ENCODE measurements at regions of chr16 and their contacts with region 1.

Region 1: GRCh38 chr16:88811769-88812512 is at the start of gene APRT:
- DNase-seq: peak; percentile 94 to 99 (median 97)
- H3K4me3 ChIP-seq: peak within 1 kb of the TSS; percentile 90 to 94
- H3K4me3 Mint-ChIP-seq: peak within 1 kb of the TSS; percentile 95 to 100 (median 97)
- H3K27ac ChIP-seq: peak within 1 kb of the TSS; percentile 67
- H3K27ac Mint-ChIP-seq: peak within 1 kb of the TSS; percentile 88 to 98 (median 97)
- H3K4me1 ChIP-seq: peaks cover 21% of the 10 kb centered on the region
- H3K4me1 Mint-ChIP-seq: peaks cover 1 to 28% (median 15%) of the 10 kb centered on the region in 4 donors
- H3K27me3 ChIP-seq: no peaks in the 10 kb centered on the region
- H3K27me3 Mint-ChIP-seq: no peaks in the 10 kb centered on the region
- total RNA-seq, gene APRT: 171 to 175 TPM

Region 2: DNA sequence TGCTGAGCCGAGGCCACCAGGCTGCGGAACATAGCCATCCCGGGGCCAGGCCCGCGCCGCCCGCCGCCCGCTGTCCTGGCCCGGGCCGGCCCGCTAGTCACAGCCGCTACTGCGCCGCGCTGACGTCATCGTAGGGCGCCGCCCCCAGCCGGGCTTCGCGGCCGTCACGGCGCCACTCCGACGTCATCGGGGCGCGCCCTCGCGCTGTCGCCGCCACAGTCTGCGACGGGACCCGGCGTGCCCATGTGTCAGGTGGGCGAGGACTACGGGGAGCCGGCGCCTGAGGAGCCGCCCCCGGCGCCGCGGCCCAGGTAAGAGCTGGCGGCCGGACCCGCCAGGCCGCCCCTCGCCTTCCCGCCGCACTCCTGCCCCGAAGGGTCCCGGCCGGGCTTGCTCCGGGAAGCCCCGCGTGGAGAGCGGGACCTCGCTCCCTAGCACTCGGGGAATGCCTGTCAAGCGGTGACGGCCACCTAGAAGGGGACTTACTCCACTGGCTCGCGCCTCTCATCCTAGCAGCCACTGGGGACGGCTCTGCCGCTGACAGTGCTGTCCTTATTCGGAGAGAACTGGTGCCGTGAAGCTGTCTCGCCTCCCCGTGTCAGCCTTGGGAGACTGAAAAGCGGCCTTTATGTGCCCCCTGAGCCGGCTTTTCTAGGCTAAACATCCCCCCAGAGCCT is 105.5 kb before region 1 on chr16 and contains the starts of genes CTU2 and RNF166:
- CTCF ChIA-PET with region 1: interaction called, 4 read pairs
- POLR2A ChIA-PET with region 1: interaction called, 42 read pairs
- intact Hi-C with region 1: no loop called
- DNase-seq: peak; percentile 90 to 94 (median 91)
- H3K4me3 ChIP-seq: peak within 1 kb of the TSS; percentile 95 to 98
- H3K4me3 Mint-ChIP-seq: peak within 1 kb of the TSS; percentile 93 to 96 (median 96)
- H3K27ac ChIP-seq: peak within 1 kb of the TSS; percentile 85
- H3K27ac Mint-ChIP-seq: peak within 1 kb of the TSS; percentile 97 to 99 (median 98)
- H3K4me1 ChIP-seq: peaks cover 50% of the 10 kb centered on the region
- H3K4me1 Mint-ChIP-seq: peaks cover 20 to 62% (median 39%) of the 10 kb centered on the region in 4 donors
- H3K27me3 ChIP-seq: no peaks in the 10 kb centered on the region
- H3K27me3 Mint-ChIP-seq: no peaks in the 10 kb centered on the region
- total RNA-seq, gene CTU2: 20.4 to 21.1 TPM
- total RNA-seq, gene RNF166: 129 to 137 TPM

Region 3: GRCh38 chr16:88925101-88925887 is 113.4 kb after region 1 on chr16:
- CTCF ChIA-PET with region 1: no interaction called
- POLR2A ChIA-PET with region 1: no interaction called
- intact Hi-C with region 1: no loop called
- DNase-seq: no peak
- H3K4me3 ChIP-seq: no peak overlapping the region
- H3K4me3 Mint-ChIP-seq: no peak overlapping the region
- H3K27ac ChIP-seq: no peak overlapping the region
- H3K27ac Mint-ChIP-seq: no peak overlapping the region
- H3K4me1 ChIP-seq: peaks cover 8% of the 10 kb centered on the region
- H3K4me1 Mint-ChIP-seq: peaks cover 2 to 5% (median 3%) of the 10 kb centered on the region in 4 donors
- H3K27me3 ChIP-seq: no peaks in the 10 kb centered on the region
- H3K27me3 Mint-ChIP-seq: peaks cover 0 to 2% of the 10 kb centered on the region in 2 donors

Region 4: DNA sequence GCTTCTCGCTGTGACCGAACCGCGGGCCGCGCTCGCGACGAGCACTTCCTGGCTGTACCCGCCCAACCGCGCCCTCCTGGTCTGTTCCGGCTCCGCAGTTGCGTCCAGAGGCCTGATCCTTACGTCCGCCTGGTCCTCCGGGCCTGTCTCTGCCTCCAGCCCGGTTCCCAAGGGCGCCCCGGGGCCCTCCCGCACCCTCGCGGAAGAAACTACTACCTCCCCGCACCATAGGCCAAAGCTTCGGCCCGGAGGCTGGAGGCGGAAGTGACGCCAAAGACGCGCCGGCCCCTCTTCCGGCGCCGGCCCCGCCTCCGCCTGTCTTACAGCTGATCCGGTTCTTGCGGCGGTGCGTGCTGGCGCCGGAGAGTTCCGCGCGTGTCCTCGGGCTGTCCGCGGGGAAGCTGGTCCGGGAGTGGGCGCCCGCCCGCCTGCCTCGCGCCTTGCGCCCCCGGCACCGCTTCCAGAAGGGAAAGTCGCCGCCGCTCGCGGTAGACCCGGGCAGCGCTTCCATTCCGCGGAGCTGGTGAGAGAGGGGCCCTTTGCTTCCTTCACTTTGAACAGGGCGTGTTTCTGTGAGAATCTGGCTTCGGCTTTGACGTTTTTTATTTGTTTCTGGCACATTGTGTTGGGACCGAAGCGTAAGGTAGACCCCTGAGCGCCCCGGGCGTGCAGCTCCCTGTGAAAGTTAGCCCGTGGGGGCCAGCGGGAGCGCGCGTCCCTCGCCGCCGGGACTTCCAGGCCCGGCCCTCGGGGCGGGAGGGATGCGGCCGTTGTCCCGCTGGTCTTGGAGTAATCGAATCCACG is 405.6 kb after region 1 on chr16 and contains the start of gene ZNF778:
- CTCF ChIA-PET with region 1: interaction called, 4 read pairs
- POLR2A ChIA-PET with region 1: interaction called, 9 read pairs
- intact Hi-C with region 1: loop called (anchors 1 kb)
- DNase-seq: peak; percentile 83 to 87 (median 85)
- H3K4me3 ChIP-seq: peak within 1 kb of the TSS; percentile 76 to 91
- H3K4me3 Mint-ChIP-seq: peak within 1 kb of the TSS; percentile 73 to 94 (median 92)
- H3K27ac ChIP-seq: peak within 1 kb of the TSS; percentile 94
- H3K27ac Mint-ChIP-seq: peak within 1 kb of the TSS; percentile 64 to 98 (median 92)
- H3K4me1 ChIP-seq: peaks cover 21% of the 10 kb centered on the region
- H3K4me1 Mint-ChIP-seq: peaks cover 10 to 37% (median 26%) of the 10 kb centered on the region in 4 donors
- H3K27me3 ChIP-seq: no peaks in the 10 kb centered on the region
- H3K27me3 Mint-ChIP-seq: no peaks in the 10 kb centered on the region
- total RNA-seq, gene ZNF778: 13.1 to 15.9 TPM

Measured in CD4-positive, alpha-beta memory T cell (primary cell).